Activated CD4-positive, alpha-beta memory T cell treated with anti-CD3 and anti-CD28 coated beads, Interleukin-2, amount 10 ng/mL, durations not matched to agents 7 days and 5 days (primary cell): ENCODE measurements at regions of chr12 and their contacts with region 1.

Region 1: DNA sequence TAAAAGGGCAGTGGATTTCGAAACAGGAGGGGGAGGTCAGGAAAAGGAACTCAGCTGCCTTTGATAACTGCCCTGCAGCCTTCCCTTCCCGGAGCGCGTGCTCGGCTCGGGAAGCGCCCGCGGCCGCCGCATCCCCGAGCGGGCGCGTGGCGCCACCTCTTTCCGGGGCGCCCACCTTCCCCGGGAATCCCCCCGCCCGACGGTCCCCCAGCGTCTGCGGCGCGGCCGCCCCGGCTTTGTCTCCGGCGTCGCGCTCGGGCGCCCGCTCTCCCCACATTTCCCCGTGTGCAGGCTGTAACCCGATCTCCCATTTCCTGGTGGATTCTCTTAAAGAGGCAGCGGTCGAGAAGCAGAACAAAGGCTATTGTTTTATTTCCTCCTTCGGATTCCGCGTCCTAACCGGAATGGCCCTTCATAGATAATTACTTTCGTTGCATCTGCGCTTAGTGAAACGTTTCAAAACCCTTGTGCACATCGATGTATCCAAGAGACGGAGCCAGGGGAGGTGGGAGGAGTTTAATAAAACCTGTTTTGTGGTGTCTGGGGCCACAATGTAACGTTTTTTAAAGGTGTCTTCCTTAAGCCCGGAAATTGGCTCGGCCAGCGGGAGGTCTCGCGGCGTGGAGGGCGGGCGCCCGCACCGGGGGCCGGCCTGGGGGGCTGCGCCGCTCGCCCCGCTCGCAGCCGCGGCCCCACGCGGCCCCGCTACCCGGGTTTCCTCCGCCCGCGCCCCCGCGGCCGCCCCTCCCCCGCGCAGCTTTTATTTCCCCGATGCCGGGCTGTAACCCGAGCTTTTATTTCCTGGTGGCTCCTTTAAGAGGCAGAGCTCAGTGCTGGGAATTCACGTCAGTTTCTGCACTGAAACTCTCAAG is at the start of gene ETV6:
- DNase-seq: peak; percentile 77
- H3K4me3 Mint-ChIP-seq: peak within 1 kb of the TSS; percentile 95
- H3K27ac Mint-ChIP-seq: peak within 1 kb of the TSS; percentile 96
- H3K4me1 Mint-ChIP-seq: peaks cover 28% of the 10 kb centered on the region
- H3K27me3 Mint-ChIP-seq: no peaks in the 10 kb centered on the region
- total RNA-seq, gene ETV6: 53.7 to 54.9 TPM

Region 2: DNA sequence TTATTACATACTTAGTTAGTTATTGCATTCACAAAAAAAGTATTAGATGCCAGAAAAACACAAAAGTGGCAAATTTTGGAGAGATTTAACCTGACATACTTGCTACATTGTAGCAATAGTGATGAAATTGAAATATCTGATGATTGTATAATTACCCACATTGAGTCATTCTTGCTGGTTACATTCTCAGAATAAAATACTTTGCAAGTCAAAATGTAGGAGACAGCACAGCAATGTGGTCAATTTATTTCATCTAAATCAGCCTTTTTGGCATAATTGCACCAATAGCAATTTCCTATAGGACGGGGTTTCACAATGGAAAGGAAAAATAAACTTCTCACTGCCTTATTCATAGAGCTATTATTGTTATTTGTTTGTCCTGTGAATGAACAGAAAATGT is 124.6 kb before region 1 on chr12:
- CTCF ChIA-PET with region 1: no interaction called
- POLR2A ChIA-PET with region 1: no interaction called
- DNase-seq: no peak
- H3K4me3 Mint-ChIP-seq: no peak overlapping the region
- H3K27ac Mint-ChIP-seq: no peak overlapping the region
- H3K4me1 Mint-ChIP-seq: no peaks in the 10 kb centered on the region
- H3K27me3 Mint-ChIP-seq: peaks cover 18% of the 10 kb centered on the region

Region 3: DNA sequence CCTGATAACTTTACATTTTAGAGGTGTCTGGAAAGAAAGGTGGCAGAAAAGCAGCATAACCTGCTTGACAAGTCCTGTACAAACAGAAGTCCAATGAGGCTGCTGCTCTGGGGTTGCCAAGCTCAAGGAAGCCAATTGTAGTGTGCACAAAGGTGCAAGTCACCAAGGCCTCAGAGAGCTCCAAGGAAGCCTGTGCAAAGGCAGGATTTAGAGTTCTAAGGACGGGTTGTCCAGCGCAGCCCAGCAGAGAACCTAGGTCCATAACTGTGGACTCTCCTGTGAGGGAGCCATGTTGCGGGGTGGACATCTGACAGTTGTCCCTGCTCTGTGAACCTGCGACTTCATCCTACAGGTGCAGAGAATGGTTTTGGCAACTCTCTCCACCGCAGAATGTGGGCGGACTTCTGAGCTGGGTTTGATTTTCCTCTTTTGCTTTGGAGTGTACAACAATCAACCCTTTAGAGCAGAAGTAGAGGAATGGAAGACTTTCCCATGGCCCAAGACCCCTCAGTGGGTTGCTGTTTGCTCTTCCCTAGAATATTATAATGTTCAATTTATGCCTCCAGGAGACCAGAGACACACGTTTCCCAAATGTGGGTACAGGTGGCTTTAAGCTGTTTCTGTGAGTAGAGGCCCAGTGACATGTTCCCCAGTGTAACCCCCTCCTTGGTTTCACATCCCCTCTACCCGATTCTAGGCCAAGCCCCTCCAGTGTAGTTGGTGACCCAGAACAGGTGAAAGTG is 81.4 kb after region 1 on chr12:
- CTCF ChIA-PET with region 1: no interaction called
- POLR2A ChIA-PET with region 1: interaction called, 10 read pairs
- DNase-seq: no peak
- H3K4me3 Mint-ChIP-seq: no peak overlapping the region
- H3K27ac Mint-ChIP-seq: peak overlapping the region; percentile 70
- H3K4me1 Mint-ChIP-seq: peaks cover 70% of the 10 kb centered on the region
- H3K27me3 Mint-ChIP-seq: no peaks in the 10 kb centered on the region

Region 4: GRCh38 chr12:11981121-11981733 is 332.2 kb after region 1 on chr12:
- CTCF ChIA-PET with region 1: no interaction called
- POLR2A ChIA-PET with region 1: interaction called, 23 read pairs
- DNase-seq: peak; percentile 66
- H3K4me3 Mint-ChIP-seq: peak overlapping the region; percentile 34
- H3K27ac Mint-ChIP-seq: peak overlapping the region; percentile 98
- H3K4me1 Mint-ChIP-seq: peaks cover 61% of the 10 kb centered on the region
- H3K27me3 Mint-ChIP-seq: peaks cover 2% of the 10 kb centered on the region

Region 5: GRCh38 chr12:12032851-12033588 is 384.0 kb after region 1 on chr12:
- CTCF ChIA-PET with region 1: interaction called, 7 read pairs
- POLR2A ChIA-PET with region 1: interaction called, 15 read pairs
- DNase-seq: peak; percentile 77
- H3K4me3 Mint-ChIP-seq: peak overlapping the region; percentile 62
- H3K27ac Mint-ChIP-seq: peak overlapping the region; percentile 69
- H3K4me1 Mint-ChIP-seq: peaks cover 25% of the 10 kb centered on the region
- H3K27me3 Mint-ChIP-seq: no peaks in the 10 kb centered on the region